K562 (cell line): ENCODE measurements at regions of chr17 and their contacts with region 1.

Region 1: GRCh38 chr17:29867643-29868181 is 62.3 kb downstream of the SSH2 start:
- DNase-seq: no peak
- ATAC-seq: no peak
- H3K4me3 ChIP-seq: no peak overlapping the region
- H3K27ac ChIP-seq: no peak overlapping the region
- H3K4me1 ChIP-seq: no peaks in the 10 kb centered on the region; a peak in 1 of 5 replicates
- H3K27me3 ChIP-seq: no peaks in the 10 kb centered on the region
- CTCF ChIP-seq: peak in 1 of 3 experiments; percentile 30; a peak in 1 of 6 replicates
- EP300 ChIP-seq: no peak
- POLR2A ChIP-seq: no peak
- RAD21 ChIP-seq: peak in 1 of 2 experiments; percentile 41; a peak in 2 of 4 replicates

Region 2: DNA sequence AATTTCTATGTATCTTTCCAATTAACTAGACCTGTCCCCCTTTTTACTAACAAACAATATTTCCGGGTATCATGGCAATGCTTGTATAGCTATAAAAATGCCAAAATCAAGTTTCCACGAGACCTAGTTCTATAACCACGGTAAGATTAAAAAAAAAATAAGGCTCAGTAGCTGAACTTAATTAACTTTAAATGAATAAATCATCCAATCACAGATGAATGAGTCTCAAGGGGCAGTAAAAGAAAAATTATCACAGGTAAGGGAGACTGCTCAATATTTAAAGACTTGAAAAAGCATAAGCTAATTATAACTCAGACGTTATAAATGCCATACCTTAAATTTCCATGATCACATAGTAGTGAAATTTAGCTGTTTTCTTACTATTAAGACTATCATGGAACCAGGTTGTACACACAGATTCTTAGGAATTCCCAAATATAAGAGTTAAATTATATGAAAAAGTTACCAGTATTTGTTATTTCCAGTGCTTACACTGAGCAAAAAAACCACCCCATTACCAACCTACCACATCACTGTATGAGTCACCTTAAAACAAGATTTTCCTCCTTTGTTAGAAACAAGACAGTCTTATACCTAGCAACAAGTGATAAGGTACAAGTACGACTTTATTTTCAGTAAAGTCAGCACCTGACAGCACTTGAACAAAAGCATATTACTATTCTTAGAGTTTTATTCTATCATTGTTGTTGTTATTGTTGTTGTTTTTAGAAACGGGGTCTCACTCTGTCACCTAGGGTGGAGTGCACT is 41.7 kb after region 1 on chr17:
- CTCF ChIA-PET with region 1: no interaction called
- POLR2A ChIA-PET with region 1: interaction called, 3 read pairs
- in situ Hi-C with region 1: loop called (anchors 5 kb)
- intact Hi-C with region 1: no loop called
- DNase-seq: no peak
- ATAC-seq: no peak
- H3K4me3 ChIP-seq: no peak overlapping the region
- H3K27ac ChIP-seq: no peak overlapping the region
- H3K4me1 ChIP-seq: no peaks in the 10 kb centered on the region
- H3K27me3 ChIP-seq: no peaks in the 10 kb centered on the region
- CTCF ChIP-seq: no peak
- EP300 ChIP-seq: no peak
- POLR2A ChIP-seq: no peak
- RAD21 ChIP-seq: no peak